Heart right ventricle (tissue), 16 donors: ENCODE measurements at regions of chr14 and their contacts with region 1.

Region 1: DNA sequence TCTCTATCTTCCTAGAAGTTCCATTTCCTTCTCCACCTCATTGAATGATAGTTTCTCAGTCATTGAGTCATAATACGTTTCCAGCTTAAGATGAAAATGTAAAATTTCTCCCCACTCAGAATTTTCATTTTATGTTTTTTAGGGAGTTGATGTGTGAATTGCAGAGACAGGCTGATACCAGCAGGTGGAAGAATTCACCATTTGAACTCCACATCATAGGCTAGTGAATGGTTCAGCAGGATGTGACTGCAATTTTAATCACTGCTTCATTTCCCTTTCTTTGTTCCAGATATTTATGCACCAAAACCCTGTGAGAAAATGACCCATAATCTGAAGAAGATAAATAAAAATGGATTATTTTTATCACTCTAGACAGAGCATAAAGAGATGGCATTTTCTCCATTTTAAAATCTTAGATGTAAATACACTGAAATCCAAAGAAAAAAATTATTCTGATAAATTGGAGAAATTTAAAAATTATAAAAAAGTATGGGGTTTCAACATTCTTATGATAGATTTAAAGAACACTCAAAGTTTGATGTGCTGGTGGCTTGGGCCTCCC is 10.6 kb upstream of the PYGL start:
- DNase-seq: no peak
- ATAC-seq: peak in 7 of 8 donors; percentile 50 to 87 (median 75)
- H3K4me3 ChIP-seq: no peak overlapping the region
- H3K27ac ChIP-seq: peak overlapping the region in 4 of 10 donors; percentile 13 to 85 (median 26)
- H3K4me1 ChIP-seq: peaks cover 0 to 27% (median 0%) of the 10 kb centered on the region in 9 donors
- H3K27me3 ChIP-seq: no peaks in the 10 kb centered on the region
- CTCF ChIP-seq: peak; percentile 19 to 75 (median 64)

Region 2: DNA sequence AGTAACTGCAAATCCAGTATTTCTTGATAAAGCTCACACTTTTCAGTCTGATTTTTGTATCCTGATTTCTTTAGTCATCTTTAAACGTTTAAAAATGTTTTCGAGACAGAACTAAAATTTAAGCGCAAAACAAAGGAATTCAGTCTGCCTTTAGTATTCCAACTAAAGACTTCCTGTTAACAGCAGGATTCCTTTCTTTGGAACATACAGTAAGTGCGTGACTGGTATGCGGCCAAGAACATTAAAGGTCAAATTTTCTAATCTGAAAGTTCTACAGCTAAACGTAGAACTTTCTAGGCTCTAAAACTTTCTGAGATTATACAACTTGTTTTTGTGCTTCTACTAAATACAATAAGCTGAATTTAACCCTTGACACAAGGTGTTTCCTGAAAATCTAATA is 296.7 kb before region 1 on chr14:
- intact Hi-C with region 1: no loop called
- DNase-seq: peak in 1 of 2 donors; percentile 24
- ATAC-seq: peak in 6 of 8 donors; percentile 56 to 82 (median 74)
- H3K4me3 ChIP-seq: peak overlapping the region in 4 of 10 donors; percentile 5 to 24 (median 21)
- H3K27ac ChIP-seq: peak overlapping the region; percentile 8 to 82 (median 60)
- H3K4me1 ChIP-seq: peaks cover 2 to 85% (median 46%) of the 10 kb centered on the region in 9 donors
- H3K27me3 ChIP-seq: no peaks in the 10 kb centered on the region
- CTCF ChIP-seq: no peak

Region 3: GRCh38 chr14:51079489-51079888 is 124.6 kb after region 1 on chr14:
- intact Hi-C with region 1: no loop called
- DNase-seq: no peak
- ATAC-seq: peak in 1 of 8 donors; percentile 28
- H3K4me3 ChIP-seq: no peak overlapping the region
- H3K27ac ChIP-seq: peak overlapping the region in 1 of 10 donors; percentile 3
- H3K4me1 ChIP-seq: peaks cover 0 to 11% (median 3%) of the 10 kb centered on the region in 9 donors
- H3K27me3 ChIP-seq: no peaks in the 10 kb centered on the region
- CTCF ChIP-seq: no peak

Region 4: DNA sequence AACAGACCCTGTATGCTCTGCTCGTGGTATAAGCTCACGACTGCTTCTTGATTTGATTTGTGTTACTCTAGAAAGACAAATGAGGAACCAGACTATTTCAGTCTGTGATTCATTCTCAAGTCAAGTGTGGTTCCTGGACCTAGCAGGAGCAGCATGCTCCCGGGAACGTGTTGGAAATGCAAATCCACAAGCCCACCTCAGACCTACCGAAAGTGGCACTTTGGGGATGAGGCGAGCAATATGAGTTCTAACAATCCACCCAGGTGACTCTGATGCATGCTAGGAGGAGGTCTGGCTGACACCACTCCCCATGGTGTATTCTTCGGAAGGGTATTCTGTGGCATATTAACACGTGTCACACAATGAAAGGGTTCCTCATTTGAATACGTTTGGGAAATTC is 225.7 kb after region 1 on chr14:
- intact Hi-C with region 1: no loop called
- DNase-seq: no peak
- ATAC-seq: no peak
- H3K4me3 ChIP-seq: no peak overlapping the region
- H3K27ac ChIP-seq: no peak overlapping the region
- H3K4me1 ChIP-seq: no peaks in the 10 kb centered on the region
- H3K27me3 ChIP-seq: no peaks in the 10 kb centered on the region
- CTCF ChIP-seq: no peak

Region 5: DNA sequence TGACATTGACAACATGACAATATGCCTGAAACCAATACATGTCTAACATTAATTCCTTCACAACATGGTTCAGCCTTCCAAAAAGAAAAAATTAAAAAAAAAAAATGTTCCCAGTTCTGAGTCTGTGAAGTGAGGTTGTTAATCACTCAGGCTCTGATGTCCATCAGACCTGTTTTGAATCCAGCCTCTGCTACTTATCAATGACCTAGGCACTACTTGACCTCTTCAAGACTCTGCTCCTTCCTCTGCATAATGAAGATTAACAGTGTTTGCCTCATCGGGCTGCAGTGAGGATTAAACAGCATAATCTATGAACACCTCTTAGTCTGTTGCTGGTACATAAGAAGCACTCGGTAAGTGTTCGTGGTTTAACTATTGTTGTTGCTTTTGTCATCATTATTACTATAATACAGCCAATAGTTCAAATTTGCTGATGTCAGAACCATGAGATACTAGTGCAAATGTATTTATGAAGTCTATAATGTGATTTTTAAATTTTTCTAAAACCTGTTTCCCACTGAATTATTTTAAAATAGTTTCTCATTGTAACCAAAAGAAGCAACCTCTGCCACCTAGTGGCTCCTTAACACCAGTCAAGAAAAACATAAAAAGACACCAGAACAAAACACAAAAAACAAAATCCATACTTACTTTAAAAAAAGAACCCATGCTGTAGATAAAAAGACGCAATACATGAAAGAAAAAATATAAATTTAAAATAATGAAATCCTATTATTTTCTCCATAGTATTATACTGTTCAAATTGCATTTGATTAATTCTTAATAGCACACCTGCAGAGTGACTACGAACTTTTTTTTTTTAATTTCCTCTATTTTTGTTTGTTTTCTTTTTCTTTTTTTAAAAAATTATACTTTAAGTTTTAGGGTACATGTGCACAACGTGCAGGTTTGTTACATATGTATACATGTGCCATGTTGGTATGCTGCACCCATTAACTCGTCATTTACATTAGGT is 264.9 kb after region 1 on chr14:
- intact Hi-C with region 1: loop called in 8 of 10 experiments (anchors 2 to 10 kb)
- DNase-seq: no peak
- ATAC-seq: no peak
- H3K4me3 ChIP-seq: no peak overlapping the region
- H3K27ac ChIP-seq: no peak overlapping the region
- H3K4me1 ChIP-seq: no peaks in the 10 kb centered on the region
- H3K27me3 ChIP-seq: no peaks in the 10 kb centered on the region
- CTCF ChIP-seq: peak; percentile 11 to 71 (median 62)

Region 6: GRCh38 chr14:51239813-51240803 is 285.2 kb after region 1 on chr14 and contains the start of gene TMX1:
- intact Hi-C with region 1: loop called in 1 of 10 experiments (anchors 10 kb)
- DNase-seq: peak; percentile 94 to 97
- ATAC-seq: peak; percentile 99 to 100 (median 100)
- H3K4me3 ChIP-seq: peak within 1 kb of the TSS; percentile 60 to 92 (median 82)
- H3K27ac ChIP-seq: peak within 1 kb of the TSS; percentile 16 to 91 (median 81)
- H3K4me1 ChIP-seq: peaks cover 0 to 40% (median 23%) of the 10 kb centered on the region in 9 donors
- H3K27me3 ChIP-seq: no peaks in the 10 kb centered on the region
- CTCF ChIP-seq: peak in 2 of 9 donors; percentile 6 to 23
- total RNA-seq, gene TMX1: 5.6 to 14.5 (median 6.9) TPM